SK-N-SH (cell line): ENCODE measurements at regions of chr17 and their contacts with region 1.

Region 1: GRCh38 chr17:10697092-10698081 is at the starts of genes ADPRM and SCO1:
- DNase-seq: peak; percentile 95
- H3K4me3 ChIP-seq: peak within 1 kb of the TSS; percentile 76 to 99
- H3K27ac ChIP-seq: peak within 1 kb of the TSS; percentile 93 to 94
- H3K4me1 ChIP-seq: peaks cover 7 to 8% of the 10 kb centered on the region in 2 experiments; a peak in 3 of 4 replicates
- H3K27me3 ChIP-seq: no peaks in the 10 kb centered on the region
- CTCF ChIP-seq: peak; percentile 47
- EP300 ChIP-seq: no peak
- RAD21 ChIP-seq: no peak; the same call in 1 of the 2 replicates
- polyA plus RNA-seq, gene ADPRM: 7.6 and 10.8 TPM in 2 replicates
- polyA plus RNA-seq, gene SCO1: 28.6 and 32.7 TPM in 2 replicates

Region 2: GRCh38 chr17:10683853-10684252 is 13.5 kb before region 1 on chr17:
- CTCF ChIA-PET with region 1: interaction called, 11 read pairs
- POLR2A ChIA-PET with region 1: no interaction called
- DNase-seq: peak; percentile 46
- H3K4me3 ChIP-seq: peak overlapping the region in 1 of 2 experiments; percentile 43; a peak in 1 of 4 replicates
- H3K27ac ChIP-seq: no peak overlapping the region
- H3K4me1 ChIP-seq: no peaks in the 10 kb centered on the region; a peak in 1 of 4 replicates
- H3K27me3 ChIP-seq: no peaks in the 10 kb centered on the region
- CTCF ChIP-seq: peak; percentile 68
- EP300 ChIP-seq: no peak
- RAD21 ChIP-seq: peak; percentile 28; the same call in 1 of the 2 replicates

Region 3: DNA sequence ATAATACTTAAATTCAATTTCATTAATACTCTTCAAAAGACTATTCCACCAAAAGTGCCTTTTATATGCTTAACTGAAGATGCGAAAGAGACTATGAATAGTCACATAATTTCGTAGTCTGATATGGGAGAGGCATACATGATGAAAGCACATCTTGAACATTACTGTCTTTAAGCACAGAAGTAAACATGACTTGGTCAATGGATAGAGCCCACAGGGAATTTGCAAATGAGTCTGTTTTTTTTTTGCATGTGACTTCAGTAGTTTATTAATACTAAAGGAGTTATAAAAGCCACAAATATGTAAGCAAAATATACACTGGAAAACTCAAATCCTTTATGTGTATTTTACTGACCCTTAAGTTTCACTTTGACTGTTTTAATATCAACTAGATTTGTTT is 15.9 kb after region 1 on chr17:
- CTCF ChIA-PET with region 1: no interaction called
- POLR2A ChIA-PET with region 1: no interaction called
- DNase-seq: no peak
- H3K4me3 ChIP-seq: no peak overlapping the region
- H3K27ac ChIP-seq: no peak overlapping the region
- H3K4me1 ChIP-seq: no peaks in the 10 kb centered on the region
- H3K27me3 ChIP-seq: no peaks in the 10 kb centered on the region
- CTCF ChIP-seq: no peak
- EP300 ChIP-seq: no peak
- RAD21 ChIP-seq: no peak

Region 4: GRCh38 chr17:10789694-10790271 is 92.4 kb after region 1 on chr17:
- CTCF ChIA-PET with region 1: no interaction called
- POLR2A ChIA-PET with region 1: no interaction called
- DNase-seq: no peak
- H3K4me3 ChIP-seq: no peak overlapping the region
- H3K27ac ChIP-seq: no peak overlapping the region
- H3K4me1 ChIP-seq: peaks cover 0 to 6% of the 10 kb centered on the region in 2 experiments; a peak in 1 of 4 replicates
- H3K27me3 ChIP-seq: no peaks in the 10 kb centered on the region
- CTCF ChIP-seq: no peak
- EP300 ChIP-seq: no peak
- RAD21 ChIP-seq: no peak